ENCODE measurements at regions of chr9 and their contacts with region 1.

Region 1: DNA sequence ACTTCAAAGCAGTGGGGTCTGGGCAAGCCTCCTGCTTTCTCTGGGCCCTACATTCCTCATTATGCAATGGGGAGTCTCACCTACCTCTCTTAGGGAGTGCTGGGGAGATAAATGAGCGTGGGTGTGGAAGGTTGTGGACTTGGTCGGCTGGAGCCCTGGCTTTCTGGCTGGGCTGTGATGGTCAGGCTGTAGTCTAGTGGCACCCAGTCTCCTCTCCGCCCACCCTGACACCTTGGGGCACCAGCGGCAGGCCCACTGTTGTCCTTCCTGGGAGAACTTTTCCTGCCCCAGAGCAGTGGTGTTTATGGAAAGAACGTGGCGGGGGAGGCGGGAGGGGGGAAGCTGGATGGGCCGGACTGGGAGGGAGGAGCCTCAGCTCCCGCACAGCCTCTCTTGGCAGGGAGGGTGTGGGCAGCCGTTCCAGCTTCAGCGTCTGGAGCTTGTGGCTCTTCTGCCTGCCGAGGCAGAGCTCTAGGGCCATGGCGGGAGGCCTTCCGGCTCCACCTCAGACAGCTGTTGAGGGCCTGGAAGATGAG is 4.1 kb downstream of the PTGS1 start:
- DNase-seq: no peak
- H3K4me3 ChIP-seq: peak overlapping the region; percentile 41
- H3K27ac ChIP-seq: peak overlapping the region; percentile 73
- H3K27me3 ChIP-seq: no peaks in the 10 kb centered on the region
- CTCF ChIP-seq: no peak

Region 2: DNA sequence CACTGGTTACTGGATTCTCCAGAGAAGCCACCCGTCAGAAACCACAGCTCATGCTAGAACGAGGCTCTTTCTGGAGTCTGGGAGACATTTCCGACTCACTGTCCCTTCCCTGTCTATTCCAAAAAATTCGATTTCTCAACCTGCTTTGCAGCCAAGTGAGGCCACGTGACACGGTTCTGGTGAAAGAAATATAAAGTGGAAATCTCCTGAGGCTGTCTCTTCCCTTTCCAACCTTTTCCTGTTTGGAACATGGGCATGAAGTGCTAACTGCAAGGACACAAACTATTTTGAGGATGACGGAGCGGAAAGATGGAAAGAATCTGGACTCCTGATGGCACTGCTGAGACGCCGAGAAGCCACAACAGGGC is 10.2 kb before region 1 on chr9:
- CTCF ChIA-PET with region 1: interaction called, 3 read pairs
- POLR2A ChIA-PET with region 1: interaction called, 13 read pairs
- DNase-seq: no peak
- H3K4me3 ChIP-seq: no peak overlapping the region
- H3K27ac ChIP-seq: peak overlapping the region; percentile 34
- H3K27me3 ChIP-seq: no peaks in the 10 kb centered on the region
- CTCF ChIP-seq: no peak

Measured in AG04450 (cell line).